ENCODE measurements at regions of chr15 and their contacts with region 1.

Region 1: GRCh38 chr15:83248151-83249029 is 36.1 kb downstream of the BNC1 start:
- DNase-seq: peak; percentile 18 to 71
- ATAC-seq: peak; percentile 79 to 93
- H3K4me3 ChIP-seq: no peak overlapping the region
- H3K27ac ChIP-seq: peak overlapping the region in 1 of 2 experiments; percentile 10; a peak in 1 of 6 replicates
- H3K4me1 ChIP-seq: no peaks in the 10 kb centered on the region
- CTCF ChIP-seq: peak; percentile 98
- EP300 ChIP-seq: no peak
- POLR2A ChIP-seq: no peak
- RAD21 ChIP-seq: peak; percentile 97 to 98

Region 2: GRCh38 chr15:83230258-83230657 is 18.1 kb before region 1 on chr15:
- CTCF ChIA-PET with region 1: interaction called, 12 read pairs
- POLR2A ChIA-PET with region 1: no interaction called
- DNase-seq: no peak
- ATAC-seq: no peak
- H3K4me3 ChIP-seq: no peak overlapping the region
- H3K27ac ChIP-seq: no peak overlapping the region
- H3K4me1 ChIP-seq: no peaks in the 10 kb centered on the region
- CTCF ChIP-seq: no peak
- EP300 ChIP-seq: no peak
- POLR2A ChIP-seq: no peak
- RAD21 ChIP-seq: no peak

Region 3: GRCh38 chr15:83292317-83292716 is 43.9 kb after region 1 on chr15:
- CTCF ChIA-PET with region 1: interaction called, 40 read pairs
- POLR2A ChIA-PET with region 1: interaction called, 4 read pairs
- DNase-seq: no peak
- ATAC-seq: no peak
- H3K4me3 ChIP-seq: no peak overlapping the region
- H3K27ac ChIP-seq: no peak overlapping the region
- H3K4me1 ChIP-seq: peaks cover 17% of the 10 kb centered on the region
- CTCF ChIP-seq: no peak
- EP300 ChIP-seq: no peak
- POLR2A ChIP-seq: no peak
- RAD21 ChIP-seq: no peak

Region 4: GRCh38 chr15:83372420-83372891 is 124.1 kb after region 1 on chr15:
- CTCF ChIA-PET with region 1: interaction called, 47 read pairs
- POLR2A ChIA-PET with region 1: no interaction called
- DNase-seq: no peak
- ATAC-seq: peak in 1 of 2 experiments; percentile 49; a peak in 2 of 6 replicates
- H3K4me3 ChIP-seq: no peak overlapping the region
- H3K27ac ChIP-seq: no peak overlapping the region
- H3K4me1 ChIP-seq: no peaks in the 10 kb centered on the region
- CTCF ChIP-seq: no peak
- EP300 ChIP-seq: no peak
- POLR2A ChIP-seq: no peak
- RAD21 ChIP-seq: no peak

Region 5: DNA sequence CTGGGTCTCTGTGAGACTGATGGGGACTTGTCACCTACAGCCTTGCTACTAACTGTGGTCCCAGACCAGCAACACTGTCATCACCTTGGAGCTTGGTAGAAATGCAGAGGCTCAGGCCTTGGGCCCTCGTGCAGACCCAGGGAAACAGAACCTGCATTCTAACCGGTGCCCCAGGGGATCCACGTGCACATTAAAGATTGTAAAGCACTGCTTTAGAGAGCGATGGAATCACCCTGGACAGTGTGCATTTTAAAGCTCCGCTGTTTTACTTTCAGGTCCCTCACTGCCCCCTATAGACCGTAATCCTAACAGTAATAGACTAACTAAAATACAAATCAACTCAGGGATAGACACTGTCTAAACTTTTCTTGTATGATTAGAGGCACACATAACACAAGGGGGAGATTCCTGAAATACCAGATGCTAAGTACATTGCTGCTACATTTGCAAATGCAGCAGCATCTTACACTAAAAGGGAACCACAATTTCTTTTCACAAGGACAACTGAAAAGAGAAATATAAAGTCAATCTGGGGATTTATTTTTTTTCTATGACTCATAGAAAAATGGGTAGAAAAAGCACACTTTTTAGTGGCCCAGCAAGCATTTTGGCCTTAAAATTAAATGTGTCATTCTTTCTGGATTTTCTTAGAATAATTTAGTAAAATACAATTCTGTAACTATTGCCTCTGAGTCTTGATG is 188.2 kb after region 1 on chr15:
- CTCF ChIA-PET with region 1: interaction called, 395 read pairs
- POLR2A ChIA-PET with region 1: interaction called, 9 read pairs
- DNase-seq: peak; percentile 63 to 68
- ATAC-seq: peak; percentile 83 to 91
- H3K4me3 ChIP-seq: no peak overlapping the region
- H3K27ac ChIP-seq: no peak overlapping the region
- H3K4me1 ChIP-seq: no peaks in the 10 kb centered on the region
- CTCF ChIP-seq: peak; percentile 71
- EP300 ChIP-seq: no peak
- POLR2A ChIP-seq: no peak
- RAD21 ChIP-seq: peak; percentile 74 to 85

Region 6: GRCh38 chr15:83533410-83533962 is 285.1 kb after region 1 on chr15:
- CTCF ChIA-PET with region 1: interaction called, 10 read pairs
- POLR2A ChIA-PET with region 1: no interaction called
- DNase-seq: no peak
- ATAC-seq: no peak
- H3K4me3 ChIP-seq: no peak overlapping the region
- H3K27ac ChIP-seq: no peak overlapping the region
- H3K4me1 ChIP-seq: no peaks in the 10 kb centered on the region
- CTCF ChIP-seq: no peak
- EP300 ChIP-seq: no peak
- POLR2A ChIP-seq: no peak
- RAD21 ChIP-seq: no peak

Region 7: DNA sequence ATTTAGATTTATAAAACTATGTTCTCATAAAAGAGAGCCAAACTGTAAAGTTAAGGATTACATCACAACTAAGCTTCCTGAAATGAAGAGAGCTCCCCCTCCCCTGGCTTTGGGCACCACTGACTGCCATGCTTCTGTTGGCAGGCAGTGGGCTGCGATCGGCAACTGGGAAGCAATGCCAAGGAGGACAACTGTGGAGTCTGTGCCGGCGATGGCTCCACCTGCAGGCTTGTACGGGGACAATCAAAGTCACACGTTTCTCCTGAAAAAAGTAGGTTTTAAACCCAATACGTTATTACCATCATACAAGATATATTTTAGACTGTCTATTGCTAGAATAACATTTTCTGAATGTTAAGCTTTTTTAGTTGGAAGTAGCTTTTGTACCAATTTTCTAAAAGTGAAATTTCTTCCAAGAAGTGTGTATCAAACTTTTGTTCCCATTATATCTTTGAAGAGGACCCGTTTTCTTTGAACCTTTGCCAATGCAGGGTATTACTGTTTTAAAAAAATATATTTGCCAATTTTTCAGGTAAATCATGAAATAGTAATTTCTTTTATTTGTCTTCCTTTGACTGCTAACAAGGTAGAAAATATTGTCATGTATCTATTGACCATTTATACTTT is 589.7 kb after region 1 on chr15:
- CTCF ChIA-PET with region 1: interaction called, 16 read pairs
- POLR2A ChIA-PET with region 1: no interaction called
- DNase-seq: peak; percentile 55 to 67
- ATAC-seq: peak; percentile 93 to 96
- H3K4me3 ChIP-seq: no peak overlapping the region
- H3K27ac ChIP-seq: no peak overlapping the region
- H3K4me1 ChIP-seq: no peaks in the 10 kb centered on the region
- CTCF ChIP-seq: peak; percentile 53
- EP300 ChIP-seq: no peak
- POLR2A ChIP-seq: no peak
- RAD21 ChIP-seq: peak; percentile 42 to 59; a peak in 4 of 5 replicates